Ovary (tissue), 10 donors: ENCODE measurements at regions of chr14 and their contacts with region 1.

Region 1: DNA sequence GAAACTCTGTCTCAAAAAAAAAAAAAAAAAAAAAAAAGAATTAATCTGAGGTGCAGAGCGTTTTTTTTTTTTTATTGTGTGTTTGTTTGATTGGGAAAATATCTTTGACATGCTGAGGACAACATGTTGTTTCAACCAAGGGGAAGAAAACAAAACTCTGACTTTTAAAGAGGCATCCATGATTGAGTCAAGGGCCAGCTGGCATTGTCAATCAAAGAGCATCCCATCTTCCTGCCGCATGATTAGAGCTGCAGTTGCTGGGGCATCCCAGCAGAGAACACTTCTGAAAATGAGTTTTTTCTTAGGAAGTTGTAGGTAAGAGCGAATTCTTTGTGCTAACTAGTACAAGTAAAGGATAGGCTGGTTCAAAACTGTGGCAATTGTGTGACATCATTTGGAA is 200.9 kb upstream of the DAAM1 start:
- DNase-seq: no peak
- H3K4me3 ChIP-seq: no peak overlapping the region
- H3K27ac ChIP-seq: no peak overlapping the region
- H3K4me1 ChIP-seq: no peaks in the 10 kb centered on the region
- H3K27me3 ChIP-seq: no peaks in the 10 kb centered on the region
- CTCF ChIP-seq: no peak
- EP300 ChIP-seq: no peak
- POLR2A ChIP-seq: no peak

Region 2: GRCh38 chr14:57148056-57148455 is 1839.5 kb before region 1 on chr14:
- intact Hi-C with region 1: no loop called
- DNase-seq: no peak
- H3K4me3 ChIP-seq: no peak overlapping the region
- H3K27ac ChIP-seq: no peak overlapping the region
- H3K4me1 ChIP-seq: peaks cover 4% of the 10 kb centered on the region
- H3K27me3 ChIP-seq: no peaks in the 10 kb centered on the region
- CTCF ChIP-seq: no peak
- EP300 ChIP-seq: no peak
- POLR2A ChIP-seq: no peak

Region 3: GRCh38 chr14:59677771-59678231 is 690.2 kb after region 1 on chr14:
- intact Hi-C with region 1: loop called in 1 of 4 experiments (anchors 5 kb)
- DNase-seq: no peak
- H3K4me3 ChIP-seq: no peak overlapping the region
- H3K27ac ChIP-seq: no peak overlapping the region
- H3K4me1 ChIP-seq: no peaks in the 10 kb centered on the region
- H3K27me3 ChIP-seq: no peaks in the 10 kb centered on the region
- CTCF ChIP-seq: no peak
- EP300 ChIP-seq: no peak
- POLR2A ChIP-seq: no peak